ENCODE measurements at regions of chr9 and their contacts with region 1.

Region 1: GRCh38 chr9:1337161-1337560 is 287.0 kb downstream of the DMRT2 start:
- DNase-seq: no peak
- ATAC-seq: peak; percentile 36

Region 2: DNA sequence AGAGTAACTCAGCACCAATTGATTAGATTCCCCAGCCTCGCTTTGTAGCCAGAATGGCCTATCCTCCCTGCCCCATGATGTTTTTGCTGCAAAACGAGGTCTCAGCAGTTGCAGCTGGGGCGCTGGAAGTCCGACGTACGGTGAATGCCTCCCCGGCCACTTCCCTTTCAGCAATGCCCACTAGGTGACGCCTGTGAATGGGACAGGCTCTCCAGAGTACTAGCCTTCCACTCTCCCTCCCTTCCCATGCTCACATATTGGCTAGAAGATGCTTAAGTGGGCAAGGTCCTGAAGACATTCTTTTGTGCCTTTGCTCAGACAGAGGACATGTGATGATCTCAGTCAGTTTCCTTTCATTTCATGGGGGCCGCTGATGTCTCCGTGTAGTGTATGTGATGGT is 236.2 kb before region 1 on chr9:
- intact Hi-C with region 1: loop called (anchors 2 kb)
- DNase-seq: peak; percentile 61
- ATAC-seq: peak; percentile 95